ENCODE measurements at regions of chr14 and their contacts with region 1.

Region 1: GRCh38 chr14:70013269-70013873 is 134.2 kb downstream of the SMOC1 start:
- DNase-seq: peak; percentile 41
- ATAC-seq: peak; percentile 83
- H3K4me3 ChIP-seq: no peak overlapping the region
- H3K27ac ChIP-seq: no peak overlapping the region
- H3K4me1 ChIP-seq: peaks cover 9% of the 10 kb centered on the region; the same call in 1 of the 2 replicates
- H3K27me3 ChIP-seq: no peaks in the 10 kb centered on the region
- CTCF ChIP-seq: peak; percentile 83
- EP300 ChIP-seq: no peak
- POLR2A ChIP-seq: no peak
- RAD21 ChIP-seq: peak; percentile 86

Region 2: GRCh38 chr14:69580009-69580577 is 433.3 kb before region 1 on chr14:
- CTCF ChIA-PET with region 1: no interaction called
- POLR2A ChIA-PET with region 1: no interaction called
- in situ Hi-C with region 1: loop called (anchors 25 kb)
- intact Hi-C with region 1: no loop called
- DNase-seq: peak; percentile 95
- ATAC-seq: peak; percentile 97
- H3K4me3 ChIP-seq: no peak overlapping the region
- H3K27ac ChIP-seq: peak overlapping the region; percentile 47
- H3K4me1 ChIP-seq: peaks cover 17% of the 10 kb centered on the region
- H3K27me3 ChIP-seq: peaks cover 0 to 21% of the 10 kb centered on the region in 2 experiments; a peak in 2 of 5 replicates
- CTCF ChIP-seq: peak; percentile 89
- EP300 ChIP-seq: peak; percentile 41 to 59; a peak in 1 of 4 replicates
- POLR2A ChIP-seq: no peak
- RAD21 ChIP-seq: peak; percentile 74; the same call in 1 of the 2 replicates

Region 3: GRCh38 chr14:69818757-69819191 is 194.6 kb before region 1 on chr14:
- CTCF ChIA-PET with region 1: interaction called, 21 read pairs
- POLR2A ChIA-PET with region 1: no interaction called
- in situ Hi-C with region 1: no loop called
- intact Hi-C with region 1: loop called (anchors 5 kb)
- DNase-seq: peak; percentile 68
- ATAC-seq: peak; percentile 94
- H3K4me3 ChIP-seq: no peak overlapping the region
- H3K27ac ChIP-seq: no peak overlapping the region
- H3K4me1 ChIP-seq: peaks cover 12% of the 10 kb centered on the region
- H3K27me3 ChIP-seq: no peaks in the 10 kb centered on the region; a peak in 1 of 5 replicates
- CTCF ChIP-seq: peak; percentile 88
- EP300 ChIP-seq: no peak
- POLR2A ChIP-seq: no peak
- RAD21 ChIP-seq: peak; percentile 96

Region 4: GRCh38 chr14:69943084-69943780 is 70.1 kb before region 1 on chr14:
- CTCF ChIA-PET with region 1: no interaction called
- POLR2A ChIA-PET with region 1: no interaction called
- in situ Hi-C with region 1: no loop called
- intact Hi-C with region 1: loop called (anchors 5 kb)
- DNase-seq: peak; percentile 9
- ATAC-seq: peak; percentile 65
- H3K4me3 ChIP-seq: peak overlapping the region; percentile 24 to 60 (median 55)
- H3K27ac ChIP-seq: peak overlapping the region; percentile 70
- H3K4me1 ChIP-seq: peaks cover 69% of the 10 kb centered on the region
- H3K27me3 ChIP-seq: no peaks in the 10 kb centered on the region
- CTCF ChIP-seq: no peak
- EP300 ChIP-seq: no peak
- POLR2A ChIP-seq: no peak
- RAD21 ChIP-seq: no peak